Tibial artery (tissue), 4 donors: ENCODE measurements at regions of chr10 and their contacts with region 1.

Region 1: GRCh38 chr10:97792141-97792721 is 20.4 kb upstream of the SFRP5 start:
- DNase-seq: peak; percentile 58 to 75
- H3K4me3 ChIP-seq: no peak overlapping the region
- H3K27ac ChIP-seq: no peak overlapping the region
- H3K4me1 ChIP-seq: peaks cover 0 to 10% (median 7%) of the 10 kb centered on the region in 4 donors
- H3K27me3 ChIP-seq: peaks cover 0 to 45% of the 10 kb centered on the region in 2 donors
- CTCF ChIP-seq: peak; percentile 88 to 90

Region 2: DNA sequence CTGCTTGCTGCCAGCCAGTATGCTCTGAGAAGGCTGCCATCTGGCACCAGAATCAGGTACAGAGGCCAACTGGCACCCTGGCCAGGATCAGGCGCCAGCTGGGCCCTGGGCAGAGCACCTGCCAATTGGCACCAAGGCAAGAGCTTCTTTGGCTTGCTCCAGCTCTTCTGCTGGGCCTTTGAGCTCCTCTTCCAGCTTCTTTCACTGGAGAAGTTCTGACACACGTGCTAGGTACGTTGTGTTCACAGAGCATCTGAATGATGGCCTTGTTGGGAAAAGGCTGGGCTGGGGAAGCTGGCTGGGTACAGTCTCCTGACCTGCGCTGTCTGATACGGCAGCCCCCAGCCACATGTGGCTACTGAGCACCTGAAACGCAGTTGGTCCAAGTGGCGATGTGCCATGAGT is 1401.8 kb before region 1 on chr10:
- intact Hi-C with region 1: no loop called
- DNase-seq: peak; percentile 43 to 90
- H3K4me3 ChIP-seq: no peak overlapping the region
- H3K27ac ChIP-seq: no peak overlapping the region
- H3K4me1 ChIP-seq: peaks cover 0 to 16% (median 15%) of the 10 kb centered on the region in 4 donors
- H3K27me3 ChIP-seq: peaks cover 0 to 4% of the 10 kb centered on the region in 2 donors
- CTCF ChIP-seq: no peak

Region 3: GRCh38 chr10:97543025-97543575 is 249.1 kb before region 1 on chr10:
- intact Hi-C with region 1: no loop called
- DNase-seq: peak; percentile 92 to 93
- H3K4me3 ChIP-seq: no peak overlapping the region
- H3K27ac ChIP-seq: peak overlapping the region; percentile 78 to 88
- H3K4me1 ChIP-seq: peaks cover 4 to 58% (median 45%) of the 10 kb centered on the region in 4 donors
- H3K27me3 ChIP-seq: no peaks in the 10 kb centered on the region
- CTCF ChIP-seq: no peak

Region 4: DNA sequence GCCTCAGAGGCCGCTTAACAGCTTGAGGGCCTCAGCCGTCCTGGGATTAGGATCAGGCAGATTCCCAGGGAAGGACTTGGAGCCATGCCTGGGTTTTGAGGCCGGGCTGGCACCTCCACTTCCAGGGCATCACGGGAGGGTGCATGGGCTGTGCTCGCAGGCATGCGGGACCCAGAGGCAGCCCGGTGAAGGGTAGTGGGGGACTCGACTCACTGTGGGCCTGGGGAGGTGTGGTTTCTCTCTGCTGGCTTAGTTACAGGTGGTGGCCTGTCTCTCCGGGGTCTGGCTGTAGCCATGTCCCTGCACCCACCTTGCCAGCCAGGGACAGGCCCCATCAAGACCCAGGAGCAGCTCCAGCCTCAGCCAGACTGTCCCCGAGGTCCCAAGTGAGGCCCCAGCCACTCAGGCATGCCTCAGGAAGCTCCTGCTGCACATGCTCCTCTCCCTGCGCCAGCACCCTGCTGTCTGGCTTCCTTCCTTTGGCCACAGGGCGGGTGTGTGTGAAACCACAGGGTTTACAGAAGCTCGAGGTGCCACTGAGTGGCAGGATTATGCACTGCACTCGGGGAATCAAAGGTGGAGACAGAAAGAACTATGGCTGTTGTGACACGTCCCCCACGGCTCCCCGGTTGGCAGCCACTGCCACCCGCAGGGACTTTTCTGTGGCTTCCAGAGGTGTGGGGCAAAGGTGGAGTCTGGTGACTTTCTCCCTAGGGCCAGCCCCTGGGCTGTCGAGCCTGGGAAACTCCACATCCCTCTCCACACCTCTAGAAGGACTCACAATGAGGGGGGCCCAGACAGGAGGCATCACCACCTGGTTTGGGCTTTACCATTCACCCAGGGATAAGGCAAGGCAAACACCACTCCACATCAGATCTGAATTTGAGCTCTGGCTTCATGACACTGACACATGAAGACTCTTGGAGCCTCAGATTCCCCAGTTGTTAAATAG is 77.1 kb after region 1 on chr10:
- intact Hi-C with region 1: loop called (anchors 2 kb)
- DNase-seq: peak; percentile 81 to 91
- H3K4me3 ChIP-seq: no peak overlapping the region
- H3K27ac ChIP-seq: no peak overlapping the region
- H3K4me1 ChIP-seq: peaks cover 6 to 21% (median 12%) of the 10 kb centered on the region in 4 donors
- H3K27me3 ChIP-seq: peaks cover 0 to 24% of the 10 kb centered on the region in 2 donors
- CTCF ChIP-seq: peak; percentile 90 to 95

Region 5: DNA sequence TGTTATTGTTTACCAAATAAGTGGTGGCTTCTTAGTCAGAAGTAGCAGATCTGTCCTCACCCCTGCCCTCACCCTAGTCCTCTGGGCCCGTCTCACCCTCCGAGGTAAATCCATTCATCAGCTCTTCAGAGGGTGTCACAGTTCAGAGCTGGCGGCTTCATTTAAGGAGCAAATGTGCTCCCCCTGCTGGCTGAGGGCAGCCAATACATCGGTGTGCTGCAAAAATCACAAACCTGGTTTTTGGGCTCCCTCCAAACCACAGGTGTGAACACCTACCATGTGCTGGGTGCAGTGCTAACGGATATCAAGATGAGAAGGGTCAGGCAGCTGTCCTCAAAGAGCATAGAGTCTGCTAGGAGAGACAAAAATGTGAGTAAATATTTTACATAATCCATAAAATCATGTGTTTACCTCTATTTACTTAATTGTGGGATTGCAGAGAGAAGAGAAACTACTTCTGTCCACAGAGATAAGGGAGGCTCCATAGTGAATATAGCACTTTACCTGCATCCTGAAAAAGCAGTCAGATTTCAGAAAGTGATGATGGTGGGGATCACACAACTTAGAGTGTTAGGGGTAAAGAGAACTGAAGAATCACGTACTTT is 253.7 kb after region 1 on chr10:
- intact Hi-C with region 1: loop called (anchors 10 kb)
- DNase-seq: no peak
- H3K4me3 ChIP-seq: no peak overlapping the region
- H3K27ac ChIP-seq: no peak overlapping the region
- H3K4me1 ChIP-seq: no peaks in the 10 kb centered on the region
- H3K27me3 ChIP-seq: peaks cover 0 to 41% of the 10 kb centered on the region in 2 donors
- CTCF ChIP-seq: peak; percentile 70 to 84